ENCODE measurements at regions of chr5 and their contacts with region 1.

Region 1: GRCh38 chr5:143524338-143524945 is 121.0 kb upstream of the NR3C1 start:
- DNase-seq: peak; percentile 10
- CTCF ChIP-seq: no peak

Region 2: GRCh38 chr5:143448518-143448917 is 75.9 kb before region 1 on chr5:
- CTCF ChIA-PET with region 1: no interaction called
- POLR2A ChIA-PET with region 1: no interaction called
- DNase-seq: no peak
- CTCF ChIP-seq: no peak

Region 3: GRCh38 chr5:143536364-143536763 is 11.9 kb after region 1 on chr5:
- CTCF ChIA-PET with region 1: interaction called, 21 read pairs
- POLR2A ChIA-PET with region 1: no interaction called
- DNase-seq: no peak
- CTCF ChIP-seq: no peak

Measured in GM10248 (cell line).